Mammary epithelial cell (primary cell): ENCODE measurements at regions of chr2 and their contacts with region 1.

Region 1: GRCh38 chr2:121095257-121096080 is 189.5 kb downstream of the TFCP2L1 start:
- DNase-seq: peak; percentile 67
- H3K4me3 ChIP-seq: no peak overlapping the region
- H3K27ac ChIP-seq: no peak overlapping the region
- H3K4me1 ChIP-seq: no peaks in the 10 kb centered on the region
- H3K27me3 ChIP-seq: no peaks in the 10 kb centered on the region
- CTCF ChIP-seq: peak; percentile 90 to 96

Region 2: DNA sequence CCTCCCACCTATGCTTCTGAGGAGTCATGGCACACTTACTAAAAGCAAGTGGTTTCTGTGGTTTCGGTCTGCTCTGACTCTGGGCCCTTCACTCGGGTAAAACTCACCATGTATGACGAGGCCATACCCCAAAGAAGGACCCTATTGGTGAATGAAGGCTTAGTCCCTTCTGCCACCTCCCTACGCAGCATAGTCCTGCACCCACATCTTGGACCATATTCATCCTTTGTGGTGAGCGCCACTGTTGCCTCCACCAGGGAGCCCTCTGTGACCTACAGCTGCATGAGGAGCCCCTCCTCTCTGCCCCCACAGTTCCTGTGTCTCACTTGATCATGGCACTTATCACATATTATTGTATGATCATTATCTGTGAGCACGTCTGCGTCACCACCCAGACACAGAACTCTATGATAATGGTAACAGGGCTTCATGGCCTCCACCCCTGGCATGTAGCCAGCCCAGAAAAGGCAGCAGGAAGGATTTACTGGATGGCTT is 76.2 kb after region 1 on chr2:
- CTCF ChIA-PET with region 1: no interaction called
- dilution Hi-C with region 1: no loop called
- in situ Hi-C with region 1: no loop called
- intact Hi-C with region 1: loop called (anchors 5 kb)
- DNase-seq: no peak
- H3K4me3 ChIP-seq: no peak overlapping the region
- H3K27ac ChIP-seq: peak overlapping the region; percentile 96
- H3K4me1 ChIP-seq: peaks cover 44% of the 10 kb centered on the region
- H3K27me3 ChIP-seq: no peaks in the 10 kb centered on the region
- CTCF ChIP-seq: no peak

Region 3: GRCh38 chr2:121220995-121221394 is 125.5 kb after region 1 on chr2:
- CTCF ChIA-PET with region 1: no interaction called
- dilution Hi-C with region 1: no loop called
- in situ Hi-C with region 1: no loop called
- intact Hi-C with region 1: loop called (anchors 5 kb)
- DNase-seq: peak; percentile 70
- H3K4me3 ChIP-seq: no peak overlapping the region
- H3K27ac ChIP-seq: peak overlapping the region; percentile 13
- H3K4me1 ChIP-seq: no peaks in the 10 kb centered on the region
- H3K27me3 ChIP-seq: no peaks in the 10 kb centered on the region
- CTCF ChIP-seq: no peak

Region 4: GRCh38 chr2:121319953-121320352 is 224.5 kb after region 1 on chr2:
- CTCF ChIA-PET with region 1: interaction called, 5 read pairs
- dilution Hi-C with region 1: loop called (anchors 25 kb)
- in situ Hi-C with region 1: loop called (anchors 10 kb)
- intact Hi-C with region 1: loop called (anchors 1 kb)
- DNase-seq: no peak
- H3K4me3 ChIP-seq: no peak overlapping the region
- H3K27ac ChIP-seq: no peak overlapping the region
- H3K4me1 ChIP-seq: no peaks in the 10 kb centered on the region
- H3K27me3 ChIP-seq: no peaks in the 10 kb centered on the region
- CTCF ChIP-seq: no peak

Region 5: GRCh38 chr2:121356058-121356640 is 260.7 kb after region 1 on chr2:
- CTCF ChIA-PET with region 1: interaction called, 19 read pairs
- dilution Hi-C with region 1: loop called (anchors 5 kb)
- in situ Hi-C with region 1: loop called in 1 of 2 experiments (anchors 10 kb)
- intact Hi-C with region 1: loop called (anchors 1 kb)
- DNase-seq: peak; percentile 57
- H3K4me3 ChIP-seq: no peak overlapping the region
- H3K27ac ChIP-seq: no peak overlapping the region
- H3K4me1 ChIP-seq: peaks cover 15% of the 10 kb centered on the region
- H3K27me3 ChIP-seq: no peaks in the 10 kb centered on the region
- CTCF ChIP-seq: peak; percentile 82 to 83